ENCODE measurements at regions of chr17 and their contacts with region 1.

Region 1: DNA sequence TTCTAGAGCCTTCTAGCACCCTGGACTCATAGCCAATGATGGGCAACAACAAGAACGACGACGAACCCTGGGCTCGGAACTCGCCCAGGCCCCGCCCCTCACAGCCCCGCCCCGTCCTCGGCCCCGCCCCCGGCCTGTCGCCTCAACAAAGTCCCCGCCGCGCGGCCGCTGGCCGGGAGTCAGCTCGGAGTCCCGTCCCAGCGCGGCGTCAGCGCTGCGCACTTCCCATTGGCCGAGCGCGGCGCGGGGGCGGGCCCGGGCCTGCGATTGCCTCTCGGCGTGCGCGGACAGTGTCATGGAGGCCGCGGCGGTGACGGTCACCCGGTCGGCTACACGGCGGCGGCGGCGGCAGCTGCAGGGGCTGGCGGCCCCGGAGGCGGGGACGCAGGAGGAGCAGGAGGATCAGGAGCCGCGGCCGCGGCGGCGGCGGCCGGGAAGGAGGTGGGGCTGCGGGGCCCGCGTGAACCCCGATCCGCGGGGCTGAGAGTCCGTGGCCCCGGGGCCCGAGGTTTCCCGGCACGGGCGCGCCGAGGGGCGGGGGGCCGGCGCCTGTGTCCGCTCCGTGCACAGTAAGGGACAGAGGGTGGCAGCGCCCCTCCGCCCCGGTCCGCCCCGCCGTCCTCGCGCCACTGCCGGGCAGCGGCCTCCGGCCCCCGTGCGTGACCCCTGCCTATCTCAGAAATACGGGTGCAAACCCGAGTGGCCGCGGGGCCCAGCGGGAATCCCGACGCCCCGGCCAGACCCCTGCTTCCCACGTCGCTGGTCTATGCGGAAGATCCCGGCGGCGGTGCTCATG is at the start of gene ENGASE:
- DNase-seq: peak; percentile 97
- ATAC-seq: peak; percentile 98
- total RNA-seq, gene ENGASE: 34.5 to 47.5 TPM

Region 2: DNA sequence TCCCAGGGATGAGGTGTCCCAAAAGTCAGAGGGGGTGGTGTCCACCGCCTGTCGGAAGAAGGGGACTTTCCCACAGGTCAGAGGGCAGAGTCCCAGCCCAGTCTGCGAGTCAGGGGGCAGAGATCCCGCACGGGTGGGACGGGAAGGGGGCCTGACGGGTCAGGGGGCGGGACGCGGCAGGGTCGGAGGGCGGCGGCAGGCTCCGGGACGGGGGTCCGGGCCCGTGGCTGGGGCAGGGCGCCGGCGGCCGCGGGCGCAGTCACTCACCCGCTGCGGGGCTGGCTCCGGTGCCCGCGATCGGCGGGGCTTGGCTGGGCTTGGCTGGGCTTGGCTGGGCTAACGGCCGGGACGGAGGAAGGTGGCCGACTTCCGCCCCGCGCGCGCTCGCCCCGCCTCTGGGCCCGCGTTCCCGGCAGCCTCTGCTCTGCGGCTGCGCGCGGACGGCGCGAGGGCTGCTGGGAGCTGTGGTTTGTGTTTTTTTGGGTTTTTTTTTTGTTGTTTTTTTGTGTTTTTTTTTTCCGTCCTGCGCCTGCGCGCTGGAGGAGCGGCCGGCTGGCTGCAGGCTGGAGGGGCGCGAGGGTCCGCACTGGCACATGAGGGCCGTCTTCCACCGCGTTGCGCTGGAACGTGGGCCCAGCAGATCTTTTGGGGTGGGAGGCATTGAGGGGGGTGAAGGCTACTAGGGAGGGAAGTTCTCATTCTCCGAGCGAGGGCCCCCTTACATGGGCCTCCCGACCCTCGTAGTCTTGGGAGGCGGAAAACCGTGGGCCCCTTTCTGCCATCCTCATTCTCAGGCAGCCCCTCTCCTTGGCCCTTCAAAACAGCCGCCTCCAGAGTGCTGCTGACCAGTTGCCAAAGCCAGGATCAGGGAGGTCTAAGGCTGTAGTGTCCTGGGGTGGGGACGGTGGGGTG is 65.2 kb before region 1 on chr17 and contains the start of gene CANT1:
- intact Hi-C with region 1: loop called in 1 of 2 experiments (anchors 2 kb)
- DNase-seq: peak; percentile 90
- ATAC-seq: peak; percentile 96 to 99
- total RNA-seq, gene CANT1: 30.5 to 33.3 TPM